Activated CD4-positive, alpha-beta memory T cell treated with anti-CD3 and anti-CD28 coated beads for 36 hours (primary cell): ENCODE measurements at regions of chr4 and their contacts with region 1.

Region 1: GRCh38 chr4:184263910-184264732 is 46.4 kb upstream of the ENPP6 start:
- DNase-seq: peak; percentile 97
- H3K4me3 Mint-ChIP-seq: no peak overlapping the region
- H3K27ac Mint-ChIP-seq: peak overlapping the region; percentile 11
- H3K4me1 Mint-ChIP-seq: peaks cover 52% of the 10 kb centered on the region
- H3K27me3 Mint-ChIP-seq: no peaks in the 10 kb centered on the region

Region 2: DNA sequence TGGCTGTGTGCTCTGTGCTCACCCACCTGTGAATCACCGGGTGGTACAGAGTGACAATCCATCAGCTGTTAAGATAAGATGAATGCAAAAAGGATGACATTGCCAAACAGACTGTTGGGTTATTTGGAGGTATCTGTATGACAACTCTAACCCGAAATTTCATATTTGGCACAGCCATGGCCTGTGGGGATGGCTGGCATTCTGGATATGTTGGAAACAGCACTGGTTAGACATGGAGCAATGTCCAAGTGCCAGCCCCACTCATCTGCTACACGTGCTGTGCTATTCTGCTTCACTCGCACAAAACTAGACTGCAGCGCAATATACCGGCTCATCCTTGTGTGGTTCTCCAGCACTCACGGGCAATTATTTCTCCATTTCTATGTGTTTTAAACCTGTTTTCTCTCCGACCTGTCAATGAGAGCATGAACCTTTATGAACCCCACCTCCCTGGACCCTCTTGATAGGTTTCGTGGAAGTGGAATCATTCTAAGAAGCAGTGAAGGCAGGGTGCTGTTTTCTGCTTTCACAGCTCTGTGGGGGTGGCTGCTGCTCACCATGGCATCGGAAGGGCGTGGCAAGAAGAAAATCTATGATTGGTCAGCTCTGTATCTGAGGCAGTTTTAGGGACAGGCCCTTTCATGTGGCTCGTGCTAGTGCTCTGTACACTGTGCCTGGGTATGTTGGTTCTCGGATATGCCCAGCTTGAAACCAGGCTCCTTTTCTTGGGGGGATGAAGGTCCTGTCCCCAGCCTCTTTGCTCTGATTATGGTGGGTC is 141.3 kb before region 1 on chr4:
- CTCF ChIA-PET with region 1: no interaction called
- POLR2A ChIA-PET with region 1: no interaction called
- intact Hi-C with region 1: no loop called
- DNase-seq: no peak
- H3K4me3 Mint-ChIP-seq: no peak overlapping the region
- H3K27ac Mint-ChIP-seq: no peak overlapping the region
- H3K4me1 Mint-ChIP-seq: no peaks in the 10 kb centered on the region
- H3K27me3 Mint-ChIP-seq: peaks cover 20% of the 10 kb centered on the region

Region 3: GRCh38 chr4:184215709-184216328 is 48.3 kb before region 1 on chr4:
- CTCF ChIA-PET with region 1: no interaction called
- POLR2A ChIA-PET with region 1: no interaction called
- intact Hi-C with region 1: no loop called
- DNase-seq: no peak
- H3K4me3 Mint-ChIP-seq: no peak overlapping the region
- H3K27ac Mint-ChIP-seq: no peak overlapping the region
- H3K4me1 Mint-ChIP-seq: no peaks in the 10 kb centered on the region
- H3K27me3 Mint-ChIP-seq: peaks cover 10% of the 10 kb centered on the region

Region 4: DNA sequence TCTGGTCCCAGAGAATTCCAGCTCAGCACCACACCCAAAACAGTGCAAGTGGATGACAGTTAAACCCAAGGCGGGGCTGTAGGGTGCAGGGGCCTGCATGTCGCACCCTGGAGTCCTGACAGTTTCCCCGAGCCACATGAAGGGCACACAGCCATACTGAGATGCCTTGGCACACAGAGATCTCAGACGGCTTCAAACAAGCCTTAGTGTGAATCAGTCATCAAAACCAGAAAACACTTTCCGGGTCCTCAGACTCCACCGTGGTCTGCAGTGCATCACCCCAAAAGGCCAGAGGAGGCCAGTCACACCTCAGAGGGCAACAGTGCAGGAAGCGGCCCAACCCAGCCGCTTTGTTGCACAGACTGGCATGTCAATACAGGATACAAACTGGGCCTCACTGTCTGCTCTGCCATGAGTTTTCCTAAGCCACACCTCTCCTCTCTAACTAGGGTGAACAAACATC is 18.2 kb after region 1 on chr4:
- CTCF ChIA-PET with region 1: interaction called, 78 read pairs
- POLR2A ChIA-PET with region 1: interaction called, 65 read pairs
- intact Hi-C with region 1: loop called (anchors 1 kb)
- DNase-seq: peak; percentile 87
- H3K4me3 Mint-ChIP-seq: peak overlapping the region; percentile 10
- H3K27ac Mint-ChIP-seq: peak overlapping the region; percentile 91
- H3K4me1 Mint-ChIP-seq: peaks cover 71% of the 10 kb centered on the region
- H3K27me3 Mint-ChIP-seq: peaks cover 4% of the 10 kb centered on the region

Region 5: GRCh38 chr4:184343502-184344177 is 79.5 kb after region 1 on chr4:
- CTCF ChIA-PET with region 1: interaction called, 13 read pairs
- POLR2A ChIA-PET with region 1: no interaction called
- intact Hi-C with region 1: no loop called
- DNase-seq: peak; percentile 54
- H3K4me3 Mint-ChIP-seq: peak overlapping the region; percentile 77
- H3K27ac Mint-ChIP-seq: no peak overlapping the region
- H3K4me1 Mint-ChIP-seq: peaks cover 23% of the 10 kb centered on the region
- H3K27me3 Mint-ChIP-seq: no peaks in the 10 kb centered on the region

Region 6: DNA sequence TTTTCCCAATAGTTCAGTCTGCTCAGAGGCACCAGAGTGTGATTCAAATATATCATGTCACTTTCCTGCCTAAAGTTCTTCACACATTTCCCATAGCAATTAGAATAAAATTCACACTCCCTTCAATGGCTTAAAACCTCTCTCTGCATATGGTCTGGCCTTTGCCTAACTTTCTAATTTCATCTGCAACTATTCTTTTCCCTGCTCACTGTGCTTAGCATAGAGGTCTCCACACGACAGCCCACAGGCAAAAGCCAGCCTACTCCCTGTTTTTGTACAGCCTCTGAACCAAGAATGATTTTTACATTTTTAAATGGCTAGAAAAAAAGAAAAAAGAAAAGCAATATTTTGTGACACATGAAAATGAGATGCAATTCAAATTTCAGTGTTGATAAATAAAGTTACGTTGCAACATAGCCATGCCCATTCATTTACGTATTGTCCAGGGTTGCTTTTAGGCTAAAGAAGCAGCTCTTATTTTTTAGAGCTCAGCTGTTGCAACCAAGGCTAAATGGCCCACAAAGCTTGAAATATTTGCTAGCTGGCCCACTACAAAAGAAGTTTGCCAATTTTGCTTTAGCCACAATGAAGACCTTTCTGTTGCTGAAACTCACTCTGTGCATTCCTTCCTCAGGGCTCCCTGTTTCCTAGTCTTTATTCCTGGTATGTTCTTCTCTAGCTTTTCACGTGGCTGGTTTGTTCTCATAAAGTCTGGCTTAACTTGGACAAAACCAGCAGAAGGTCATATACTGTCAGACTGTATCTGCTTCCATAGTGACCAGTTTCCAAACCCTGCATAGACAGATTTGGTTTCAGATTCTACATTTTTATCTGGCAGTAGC is 236.8 kb after region 1 on chr4:
- CTCF ChIA-PET with region 1: interaction called, 11 read pairs
- POLR2A ChIA-PET with region 1: no interaction called
- intact Hi-C with region 1: no loop called
- DNase-seq: no peak
- H3K4me3 Mint-ChIP-seq: no peak overlapping the region
- H3K27ac Mint-ChIP-seq: no peak overlapping the region
- H3K4me1 Mint-ChIP-seq: peaks cover 15% of the 10 kb centered on the region
- H3K27me3 Mint-ChIP-seq: no peaks in the 10 kb centered on the region

Region 7: GRCh38 chr4:184733654-184734524 is 469.8 kb after region 1 on chr4 and contains the start of gene CENPU:
- CTCF ChIA-PET with region 1: interaction called, 24 read pairs
- POLR2A ChIA-PET with region 1: interaction called, 9 read pairs
- intact Hi-C with region 1: loop called (anchors 1 kb)
- DNase-seq: peak; percentile 97
- H3K4me3 Mint-ChIP-seq: peak within 1 kb of the TSS; percentile 99
- H3K27ac Mint-ChIP-seq: peak within 1 kb of the TSS; percentile 88
- H3K4me1 Mint-ChIP-seq: peaks cover 24% of the 10 kb centered on the region
- H3K27me3 Mint-ChIP-seq: no peaks in the 10 kb centered on the region
- total RNA-seq, gene CENPU: 82.7 to 87.6 TPM

Region 8: GRCh38 chr4:184983672-184984356 is 719.7 kb after region 1 on chr4:
- CTCF ChIA-PET with region 1: no interaction called
- POLR2A ChIA-PET with region 1: no interaction called
- intact Hi-C with region 1: loop called (anchors 10 kb)
- DNase-seq: peak; percentile 79
- H3K4me3 Mint-ChIP-seq: no peak overlapping the region
- H3K27ac Mint-ChIP-seq: no peak overlapping the region
- H3K4me1 Mint-ChIP-seq: no peaks in the 10 kb centered on the region
- H3K27me3 Mint-ChIP-seq: no peaks in the 10 kb centered on the region